AG04450 (cell line): ENCODE measurements at regions of chr1 and their contacts with region 1.

Region 1: GRCh38 chr1:31394628-31395193 is 18.3 kb upstream of the SERINC2 start:
- DNase-seq: peak; percentile 46
- H3K4me3 ChIP-seq: peak overlapping the region; percentile 38
- H3K27ac ChIP-seq: no peak overlapping the region
- H3K27me3 ChIP-seq: no peaks in the 10 kb centered on the region
- CTCF ChIP-seq: peak; percentile 89

Region 2: DNA sequence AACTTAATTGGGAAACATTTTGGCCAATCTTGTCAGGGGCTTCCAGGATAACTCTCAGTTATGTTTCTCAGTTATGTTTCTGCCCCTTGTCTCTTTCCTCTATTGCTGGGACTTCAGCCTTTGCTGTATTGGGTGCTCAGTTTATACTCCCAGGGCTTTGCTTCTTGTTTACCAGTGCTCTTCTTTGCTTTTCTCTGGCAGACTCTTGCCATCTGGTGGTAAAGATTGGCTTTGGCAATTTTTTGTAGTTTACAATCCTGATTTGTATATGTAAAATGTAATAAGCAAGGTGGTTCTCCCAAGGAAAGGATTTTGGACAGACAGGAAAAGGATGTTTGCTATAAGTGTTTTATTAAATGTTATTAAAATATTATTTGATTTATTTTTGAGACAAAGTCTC is 59.7 kb before region 1 on chr1:
- CTCF ChIA-PET with region 1: no interaction called
- POLR2A ChIA-PET with region 1: no interaction called
- DNase-seq: peak; percentile 2
- H3K4me3 ChIP-seq: no peak overlapping the region
- H3K27ac ChIP-seq: no peak overlapping the region
- H3K27me3 ChIP-seq: no peaks in the 10 kb centered on the region
- CTCF ChIP-seq: peak; percentile 63

Region 3: DNA sequence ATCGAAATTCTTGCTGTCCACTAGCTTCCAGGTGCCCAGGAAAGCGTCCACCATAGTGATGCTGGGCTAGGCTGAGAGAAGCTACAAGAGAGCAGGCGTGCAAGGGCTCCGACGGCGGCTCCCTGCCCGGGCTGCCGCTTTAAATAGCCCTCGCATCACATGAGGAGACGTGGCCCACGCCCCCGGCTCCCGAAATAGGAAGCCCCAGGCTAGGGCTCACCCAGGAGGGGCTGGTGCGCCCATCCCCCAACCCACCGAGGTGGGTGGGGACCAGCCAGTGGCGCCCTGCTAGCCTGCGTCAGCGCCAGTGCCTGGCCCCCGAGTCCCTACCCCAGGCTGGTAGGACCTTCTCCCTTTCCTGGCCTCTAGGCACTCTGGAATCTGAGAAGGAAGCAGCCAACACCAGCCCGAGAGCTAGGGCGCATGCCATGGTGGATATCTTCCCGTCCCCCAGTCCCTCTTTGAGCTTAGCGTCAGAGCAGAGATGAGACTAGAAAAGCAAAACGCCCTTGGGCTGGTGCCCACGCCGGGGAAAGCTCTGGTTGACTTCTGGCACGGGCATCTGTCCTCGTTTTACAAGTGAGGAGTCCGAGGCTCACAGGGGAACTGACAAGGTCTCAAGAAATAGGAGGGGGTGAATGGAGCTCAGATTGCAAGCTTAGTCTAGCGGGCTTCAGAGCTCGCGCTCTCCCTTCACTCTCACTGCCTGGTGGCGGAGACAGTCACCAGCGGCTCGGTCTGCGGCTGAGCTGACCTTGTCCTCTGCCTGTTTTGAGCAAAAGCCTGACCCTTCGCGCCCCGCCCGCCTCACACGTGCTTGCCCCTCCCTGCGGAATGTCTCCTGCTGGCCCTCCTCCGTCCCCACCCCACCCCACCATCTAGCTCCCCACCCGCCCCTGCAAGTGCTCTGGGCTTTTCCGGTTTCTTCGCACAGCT is 21.5 kb before region 1 on chr1 and contains the start of gene FABP3:
- CTCF ChIA-PET with region 1: interaction called, 12 read pairs
- POLR2A ChIA-PET with region 1: interaction called, 3 read pairs
- DNase-seq: no peak
- H3K4me3 ChIP-seq: peak within 1 kb of the TSS; percentile 53
- H3K27ac ChIP-seq: peak within 1 kb of the TSS; percentile 70
- H3K27me3 ChIP-seq: no peaks in the 10 kb centered on the region
- CTCF ChIP-seq: no peak
- polyA plus RNA-seq, gene FABP3: 14.5 and 19.8 TPM in 2 replicates

Region 4: GRCh38 chr1:31413405-31414125 is 18.9 kb after region 1 on chr1:
- CTCF ChIA-PET with region 1: interaction called, 238 read pairs
- POLR2A ChIA-PET with region 1: interaction called, 8 read pairs
- DNase-seq: no peak
- H3K4me3 ChIP-seq: peak overlapping the region; percentile 85
- H3K27ac ChIP-seq: no peak overlapping the region
- H3K27me3 ChIP-seq: no peaks in the 10 kb centered on the region
- CTCF ChIP-seq: no peak

Region 5: DNA sequence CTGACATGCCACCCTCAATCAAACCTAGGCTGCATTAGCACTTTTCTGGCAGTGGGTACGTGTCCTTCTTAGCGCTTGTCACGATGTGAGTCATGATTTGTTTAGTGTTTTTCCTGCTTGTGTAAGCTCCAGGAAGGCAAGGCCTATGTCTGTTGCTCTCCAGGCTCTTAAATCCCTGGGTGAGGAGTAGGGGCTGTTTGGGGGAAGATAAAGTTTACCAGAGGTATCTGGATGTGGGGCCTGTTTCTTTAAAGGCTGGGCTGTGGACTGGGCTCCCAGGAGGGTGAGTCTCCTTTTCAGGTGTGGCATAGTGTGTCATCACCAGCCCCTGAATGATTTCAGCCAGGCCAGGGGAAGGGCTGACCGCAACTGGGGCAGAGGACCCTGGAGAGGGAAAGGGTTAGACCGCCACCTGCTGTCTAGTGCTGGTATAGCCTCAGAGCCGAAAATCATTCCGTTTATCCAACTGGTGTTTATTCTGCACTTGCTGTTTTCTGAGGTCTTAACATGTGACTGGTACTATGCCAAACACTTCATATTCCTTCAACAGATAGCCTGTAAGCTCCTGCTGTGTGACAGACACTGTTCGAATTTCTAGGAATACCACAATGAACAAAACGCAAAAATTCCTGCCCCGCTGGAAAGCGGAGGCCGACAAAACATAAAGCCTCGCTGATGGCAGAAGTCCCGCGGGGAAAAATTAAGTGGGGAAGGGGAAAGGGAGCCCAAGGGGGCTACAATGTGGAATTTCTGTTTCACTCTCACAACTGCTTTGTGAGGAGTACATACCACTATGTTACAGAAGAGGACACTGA is 28.0 kb after region 1 on chr1:
- CTCF ChIA-PET with region 1: interaction called, 238 read pairs
- POLR2A ChIA-PET with region 1: interaction called, 3 read pairs
- DNase-seq: peak; percentile 55
- H3K4me3 ChIP-seq: no peak overlapping the region
- H3K27ac ChIP-seq: peak overlapping the region; percentile 87
- H3K27me3 ChIP-seq: no peaks in the 10 kb centered on the region
- CTCF ChIP-seq: peak; percentile 99

Region 6: DNA sequence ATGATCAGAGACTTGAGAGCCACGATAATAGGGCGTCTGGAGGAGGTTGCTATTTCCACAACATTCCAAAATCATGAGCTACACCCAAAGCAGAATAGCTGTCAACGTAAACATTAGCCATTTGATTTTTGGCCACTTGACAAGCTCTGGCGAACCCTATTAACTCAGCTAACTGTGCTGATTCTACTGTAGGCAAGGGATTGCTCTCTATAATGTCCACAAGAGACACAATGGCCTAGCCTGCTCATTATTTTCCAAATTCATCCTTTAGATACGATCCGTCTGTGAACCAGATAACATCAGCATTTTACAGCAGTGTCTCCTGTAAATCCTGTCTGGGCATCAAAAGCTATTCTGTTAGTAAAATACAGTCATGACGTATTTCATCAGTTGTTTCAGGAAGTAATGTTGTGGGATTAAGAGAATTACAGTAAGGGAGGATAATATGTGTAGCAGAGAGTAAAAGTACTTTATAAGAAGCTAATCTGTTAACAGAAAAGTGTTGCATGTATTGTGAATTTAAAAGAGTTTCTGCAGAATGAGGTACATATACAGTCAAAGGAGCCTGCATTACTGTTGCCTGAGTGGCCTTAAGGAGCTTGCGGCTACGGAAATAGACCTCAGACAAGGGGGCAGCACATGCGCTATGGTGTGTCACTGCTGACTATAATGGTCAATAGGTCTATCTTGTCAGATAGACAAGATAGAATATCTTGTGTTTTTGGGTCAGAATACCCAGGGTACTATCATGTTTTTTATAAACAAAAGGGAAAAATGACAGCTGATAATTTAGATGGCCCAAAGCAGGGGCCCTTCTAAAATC is 136.7 kb after region 1 on chr1:
- CTCF ChIA-PET with region 1: interaction called, 11 read pairs
- POLR2A ChIA-PET with region 1: interaction called, 3 read pairs
- DNase-seq: peak; percentile 32
- H3K4me3 ChIP-seq: no peak overlapping the region
- H3K27ac ChIP-seq: no peak overlapping the region
- H3K27me3 ChIP-seq: peaks cover 6% of the 10 kb centered on the region
- CTCF ChIP-seq: no peak

Region 7: DNA sequence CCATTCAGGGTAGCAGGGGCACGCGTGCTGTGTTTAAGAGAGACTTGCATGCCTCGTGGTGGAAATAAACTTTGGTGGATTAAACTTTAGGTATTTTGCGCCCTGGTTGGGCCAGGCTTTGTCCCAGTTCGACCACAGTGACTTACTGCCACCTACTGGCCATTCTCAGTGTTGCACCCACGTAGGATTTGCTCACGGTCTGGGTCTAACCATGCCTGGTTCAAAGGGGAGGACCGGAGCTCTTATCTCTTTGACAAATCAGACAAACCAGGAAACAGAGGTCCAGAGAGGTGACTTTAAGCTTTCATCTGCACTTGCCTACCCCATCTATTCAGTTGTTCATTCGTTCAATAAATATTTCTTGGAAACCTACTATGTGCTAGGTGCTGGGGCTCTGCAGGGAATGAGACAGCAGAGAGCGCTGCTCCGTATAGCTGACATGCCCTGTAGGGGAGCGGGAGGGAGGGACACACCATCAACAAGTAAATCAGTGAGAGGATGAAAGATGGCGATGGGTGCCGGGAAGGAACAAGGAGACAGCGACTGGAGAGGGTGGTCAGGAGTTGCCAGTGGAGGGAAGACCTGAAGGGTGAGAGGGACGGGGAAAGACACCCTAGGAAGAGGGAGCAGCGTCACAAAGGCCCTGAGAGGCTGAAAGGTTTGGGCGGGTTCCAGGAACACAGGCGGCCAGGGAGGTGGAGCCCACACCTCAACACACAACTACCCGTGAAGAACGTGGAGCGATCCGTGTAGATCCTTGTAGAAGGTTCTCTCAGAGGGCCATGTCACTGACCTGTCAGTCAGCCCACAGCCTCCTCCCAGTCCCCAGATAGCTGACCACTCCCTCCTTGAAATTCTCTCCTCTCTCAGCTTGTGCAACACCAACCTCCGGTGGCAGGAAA is 154.4 kb after region 1 on chr1:
- CTCF ChIA-PET with region 1: interaction called, 57 read pairs
- POLR2A ChIA-PET with region 1: no interaction called
- DNase-seq: peak; percentile 70
- H3K4me3 ChIP-seq: peak overlapping the region; percentile 49
- H3K27ac ChIP-seq: no peak overlapping the region
- H3K27me3 ChIP-seq: peaks cover 20% of the 10 kb centered on the region
- CTCF ChIP-seq: peak; percentile 90

Region 8: DNA sequence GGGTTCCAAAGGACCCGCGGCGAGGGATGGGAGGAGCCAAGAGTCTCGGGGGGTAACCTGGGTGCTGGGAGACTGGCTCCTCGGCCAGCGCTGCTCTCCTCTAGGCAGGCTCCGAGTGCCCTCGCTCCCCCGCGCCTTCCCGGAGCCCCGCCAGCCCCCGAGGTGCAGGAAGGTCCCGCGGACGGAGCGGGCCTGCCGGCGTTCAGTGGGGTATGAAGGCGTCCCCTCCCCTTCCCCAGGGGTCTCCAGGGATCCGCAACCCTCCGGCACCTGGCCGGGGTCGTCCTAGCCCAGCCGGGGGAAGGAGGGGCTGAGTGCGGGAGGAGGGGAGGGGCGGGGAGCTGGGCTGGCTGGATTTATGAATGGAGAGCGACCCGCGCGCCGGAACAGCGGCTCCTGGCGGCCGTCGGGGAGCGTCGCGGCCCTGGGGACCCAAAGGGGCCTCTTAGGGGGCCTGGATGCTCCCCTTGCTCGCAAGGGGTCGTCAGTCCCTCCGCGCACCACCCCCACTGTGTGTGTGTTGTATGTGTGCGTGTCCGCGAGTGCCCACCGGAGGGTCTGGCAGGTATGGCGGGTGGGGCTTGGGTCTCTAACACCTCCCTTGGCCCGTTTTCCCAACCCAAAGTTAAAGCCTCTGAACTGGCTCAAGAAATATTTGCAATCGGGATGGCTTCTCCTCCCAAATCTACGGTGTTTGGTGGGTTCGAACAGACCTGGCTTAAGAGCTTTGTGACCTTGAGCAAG is 223.4 kb after region 1 on chr1:
- CTCF ChIA-PET with region 1: no interaction called
- POLR2A ChIA-PET with region 1: interaction called, 12 read pairs
- DNase-seq: no peak
- H3K4me3 ChIP-seq: peak overlapping the region; percentile 54
- H3K27ac ChIP-seq: no peak overlapping the region
- H3K27me3 ChIP-seq: peaks cover 21% of the 10 kb centered on the region
- CTCF ChIP-seq: peak; percentile 77